ENCODE measurements at regions of chr15 and their contacts with region 1.

Region 1: DNA sequence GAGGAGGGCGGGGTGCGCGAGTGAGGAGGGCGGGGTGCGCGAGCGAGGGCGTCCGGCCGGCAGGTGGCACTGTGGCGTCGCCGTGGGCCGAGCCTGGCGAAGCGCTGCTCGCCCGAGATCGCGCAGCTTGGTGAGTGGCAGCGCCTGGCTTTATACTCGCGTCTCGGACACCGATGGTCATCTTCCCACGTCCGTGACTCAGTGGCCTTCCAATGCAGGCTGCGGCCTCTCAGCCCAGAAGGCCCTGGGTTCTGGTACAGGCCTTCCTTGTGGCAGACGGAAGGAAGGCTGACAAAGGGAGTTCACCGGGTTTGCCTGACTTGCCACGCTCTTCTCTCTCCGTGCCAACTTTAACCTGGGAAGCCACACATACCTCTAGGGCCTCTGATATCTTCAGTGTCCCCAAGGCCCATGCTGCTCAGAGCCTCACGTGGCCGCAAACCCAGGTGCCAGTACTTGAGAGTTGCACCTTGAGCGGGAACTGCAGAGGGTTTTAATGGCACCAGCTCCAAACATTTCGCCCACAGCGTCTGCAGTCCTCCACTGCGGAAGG is 195.3 kb upstream of the LYSMD4 start:
- DNase-seq: no peak
- ATAC-seq: peak; percentile 95
- H3K4me3 ChIP-seq: peak overlapping the region; percentile 43 to 67
- H3K27ac ChIP-seq: peak overlapping the region; percentile 63; the same call in 1 of the 2 replicates
- H3K4me1 ChIP-seq: peaks cover 3% of the 10 kb centered on the region; the same call in 1 of the 2 replicates
- H3K27me3 ChIP-seq: peaks cover 4% of the 10 kb centered on the region; the same call in 1 of the 2 replicates
- CTCF ChIP-seq: peak; percentile 76

Region 2: GRCh38 chr15:99967841-99968371 is 39.4 kb after region 1 on chr15:
- CTCF ChIA-PET with region 1: no interaction called
- POLR2A ChIA-PET with region 1: interaction called, 19 read pairs
- in situ Hi-C with region 1: no loop called
- intact Hi-C with region 1: no loop called
- DNase-seq: no peak
- ATAC-seq: no peak
- H3K4me3 ChIP-seq: no peak overlapping the region
- H3K27ac ChIP-seq: no peak overlapping the region
- H3K4me1 ChIP-seq: no peaks in the 10 kb centered on the region
- H3K27me3 ChIP-seq: no peaks in the 10 kb centered on the region
- CTCF ChIP-seq: no peak

Region 3: GRCh38 chr15:100131321-100132224 is 203.1 kb after region 1 on chr15:
- CTCF ChIA-PET with region 1: no interaction called
- POLR2A ChIA-PET with region 1: no interaction called
- in situ Hi-C with region 1: no loop called
- intact Hi-C with region 1: loop called (anchors 2 kb)
- DNase-seq: no peak
- ATAC-seq: peak; percentile 96
- H3K4me3 ChIP-seq: peak overlapping the region; percentile 23 to 45; a peak in 3 of 4 replicates
- H3K27ac ChIP-seq: no peak overlapping the region
- H3K4me1 ChIP-seq: no peaks in the 10 kb centered on the region
- H3K27me3 ChIP-seq: peaks cover 3% of the 10 kb centered on the region
- CTCF ChIP-seq: peak; percentile 82

Region 4: DNA sequence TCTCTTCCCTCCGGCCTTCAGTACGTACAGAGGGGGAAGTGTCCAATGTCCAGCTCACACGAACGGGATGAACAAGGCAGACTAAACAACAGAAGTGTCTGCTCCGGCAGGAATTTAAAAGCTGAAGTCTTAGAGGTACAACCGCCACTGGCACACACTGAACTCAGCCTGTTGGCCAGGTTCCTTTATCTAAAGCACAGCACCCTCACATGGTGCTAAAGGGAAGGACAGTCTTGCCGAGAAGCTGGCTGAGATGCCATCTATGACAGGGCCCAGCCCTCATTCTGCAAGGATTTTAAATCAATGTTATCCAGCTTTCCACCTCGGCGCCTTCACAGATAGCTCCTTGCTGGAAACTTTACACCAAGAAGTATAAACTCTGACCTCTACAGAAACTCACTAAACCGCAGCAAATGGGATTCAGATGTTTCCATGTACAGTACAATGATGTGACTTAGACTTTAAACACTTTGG is 410.5 kb after region 1 on chr15:
- CTCF ChIA-PET with region 1: interaction called, 5 read pairs
- POLR2A ChIA-PET with region 1: no interaction called
- in situ Hi-C with region 1: no loop called
- intact Hi-C with region 1: loop called (anchors 2 kb)
- DNase-seq: no peak
- ATAC-seq: peak; percentile 64
- H3K4me3 ChIP-seq: no peak overlapping the region
- H3K27ac ChIP-seq: no peak overlapping the region
- H3K4me1 ChIP-seq: no peaks in the 10 kb centered on the region
- H3K27me3 ChIP-seq: peaks cover 14% of the 10 kb centered on the region
- CTCF ChIP-seq: peak; percentile 77